Tibial artery (tissue), 4 donors: ENCODE measurements at regions of chr6 and their contacts with region 1.

Region 1: GRCh38 chr6:10429638-10430427 is 15.0 kb upstream of the TFAP2A start:
- DNase-seq: no peak
- H3K4me3 ChIP-seq: no peak overlapping the region
- H3K27ac ChIP-seq: no peak overlapping the region
- H3K4me1 ChIP-seq: peaks cover 0 to 18% (median 14%) of the 10 kb centered on the region in 4 donors
- H3K27me3 ChIP-seq: peaks cover 0 to 54% of the 10 kb centered on the region in 2 donors
- CTCF ChIP-seq: peak in 1 of 2 experiments; percentile 35

Region 2: GRCh38 chr6:8983188-8983688 is 1446.6 kb before region 1 on chr6:
- intact Hi-C with region 1: loop called (anchors 10 kb)
- DNase-seq: peak; percentile 60 to 73
- H3K4me3 ChIP-seq: no peak overlapping the region
- H3K27ac ChIP-seq: no peak overlapping the region
- H3K4me1 ChIP-seq: no peaks in the 10 kb centered on the region
- H3K27me3 ChIP-seq: peaks cover 0 to 7% of the 10 kb centered on the region in 2 donors
- CTCF ChIP-seq: peak; percentile 66 to 90

Region 3: DNA sequence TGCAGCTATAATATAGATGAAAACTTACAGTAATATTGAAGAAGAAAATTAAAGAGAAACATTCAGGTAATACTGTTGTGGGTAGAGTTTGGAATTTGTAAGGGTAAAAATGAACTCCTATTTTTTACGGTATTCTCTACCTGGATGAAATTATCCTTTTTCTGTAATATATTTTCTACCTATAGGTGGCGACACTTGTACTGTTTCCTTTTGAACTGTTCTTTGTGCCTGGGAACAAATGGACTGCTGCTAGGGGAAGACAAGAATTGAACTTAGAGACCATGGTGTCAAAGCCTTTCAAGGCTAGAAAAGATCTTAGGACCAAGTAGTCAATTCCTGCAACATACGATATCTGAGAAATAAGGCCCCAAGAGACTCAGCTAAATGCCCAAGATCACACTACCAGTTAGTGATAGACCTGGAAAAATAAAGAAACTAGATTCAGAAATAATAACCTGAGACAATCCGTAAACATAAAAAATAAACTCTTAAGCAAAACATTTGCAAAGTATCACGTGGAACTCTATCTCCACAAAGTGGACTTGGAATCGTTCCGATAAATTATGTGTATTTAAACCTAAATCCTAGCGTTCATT is 398.8 kb before region 1 on chr6:
- intact Hi-C with region 1: loop called (anchors 10 kb)
- DNase-seq: no peak
- H3K4me3 ChIP-seq: no peak overlapping the region
- H3K27ac ChIP-seq: no peak overlapping the region
- H3K4me1 ChIP-seq: no peaks in the 10 kb centered on the region
- H3K27me3 ChIP-seq: peaks cover 0 to 3% of the 10 kb centered on the region in 2 donors
- CTCF ChIP-seq: peak; percentile 21 to 30